IMR-90 (cell line): ENCODE measurements at regions of chr2 and their contacts with region 1.

Region 1: GRCh38 chr2:163735685-163736432 is at the start of gene FIGN:
- DNase-seq: peak; percentile 82
- ATAC-seq: peak; percentile 88
- H3K4me3 ChIP-seq: peak within 1 kb of the TSS; percentile 55
- H3K27ac ChIP-seq: peak within 1 kb of the TSS; percentile 81
- H3K4me1 ChIP-seq: peaks cover 2% of the 10 kb centered on the region
- H3K27me3 ChIP-seq: peaks cover 3% of the 10 kb centered on the region; the same call in 1 of the 2 replicates
- CTCF ChIP-seq: no peak
- POLR2A ChIP-seq: peak; percentile 70; the same call in 1 of the 2 replicates
- RAD21 ChIP-seq: no peak
- total RNA-seq, gene FIGN: 0.56 and 0.90 TPM in 2 replicates

Region 2: GRCh38 chr2:163155279-163155883 is 580.5 kb before region 1 on chr2:
- CTCF ChIA-PET with region 1: interaction called, 3 read pairs
- POLR2A ChIA-PET with region 1: no interaction called
- dilution Hi-C with region 1: no loop called
- in situ Hi-C with region 1: no loop called
- intact Hi-C with region 1: loop called (anchors 10 kb)
- DNase-seq: peak; percentile 35
- ATAC-seq: peak; percentile 52
- H3K4me3 ChIP-seq: no peak overlapping the region
- H3K27ac ChIP-seq: no peak overlapping the region
- H3K4me1 ChIP-seq: peaks cover 8% of the 10 kb centered on the region
- H3K27me3 ChIP-seq: no peaks in the 10 kb centered on the region
- CTCF ChIP-seq: peak; percentile 73
- POLR2A ChIP-seq: no peak
- RAD21 ChIP-seq: peak; percentile 80

Region 3: GRCh38 chr2:163351143-163351542 is 384.7 kb before region 1 on chr2:
- CTCF ChIA-PET with region 1: interaction called, 10 read pairs
- POLR2A ChIA-PET with region 1: interaction called, 4 read pairs
- dilution Hi-C with region 1: no loop called
- in situ Hi-C with region 1: no loop called
- intact Hi-C with region 1: loop called (anchors 1 kb)
- DNase-seq: no peak
- ATAC-seq: no peak
- H3K4me3 ChIP-seq: no peak overlapping the region
- H3K27ac ChIP-seq: no peak overlapping the region
- H3K4me1 ChIP-seq: peaks cover 9% of the 10 kb centered on the region
- H3K27me3 ChIP-seq: no peaks in the 10 kb centered on the region
- CTCF ChIP-seq: no peak
- POLR2A ChIP-seq: no peak
- RAD21 ChIP-seq: no peak

Region 4: DNA sequence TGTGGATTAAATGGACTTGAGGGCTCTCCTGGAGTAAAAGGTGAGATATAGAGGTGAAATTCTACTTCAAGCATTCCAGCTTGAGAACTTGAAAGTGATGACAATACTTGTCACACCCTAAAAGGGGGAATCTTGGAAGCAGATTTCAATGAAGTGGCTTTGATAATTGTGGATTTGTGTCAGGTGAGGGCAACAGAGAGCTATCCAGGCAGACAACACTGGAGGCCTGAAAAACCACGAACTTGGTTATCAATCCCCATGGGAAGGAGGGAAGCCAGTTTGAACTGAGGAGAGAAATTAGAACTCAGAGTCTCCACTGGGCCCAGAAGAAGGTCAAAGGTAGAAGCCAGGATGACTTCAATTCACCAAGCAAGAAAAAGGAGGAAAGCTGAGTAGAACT is 263.9 kb before region 1 on chr2:
- CTCF ChIA-PET with region 1: no interaction called
- POLR2A ChIA-PET with region 1: no interaction called
- dilution Hi-C with region 1: no loop called
- in situ Hi-C with region 1: no loop called
- intact Hi-C with region 1: loop called (anchors 10 kb)
- DNase-seq: peak; percentile 3
- ATAC-seq: no peak
- H3K4me3 ChIP-seq: no peak overlapping the region
- H3K27ac ChIP-seq: no peak overlapping the region
- H3K4me1 ChIP-seq: no peaks in the 10 kb centered on the region
- H3K27me3 ChIP-seq: no peaks in the 10 kb centered on the region
- CTCF ChIP-seq: peak; percentile 38
- POLR2A ChIP-seq: no peak
- RAD21 ChIP-seq: peak; percentile 51

Region 5: DNA sequence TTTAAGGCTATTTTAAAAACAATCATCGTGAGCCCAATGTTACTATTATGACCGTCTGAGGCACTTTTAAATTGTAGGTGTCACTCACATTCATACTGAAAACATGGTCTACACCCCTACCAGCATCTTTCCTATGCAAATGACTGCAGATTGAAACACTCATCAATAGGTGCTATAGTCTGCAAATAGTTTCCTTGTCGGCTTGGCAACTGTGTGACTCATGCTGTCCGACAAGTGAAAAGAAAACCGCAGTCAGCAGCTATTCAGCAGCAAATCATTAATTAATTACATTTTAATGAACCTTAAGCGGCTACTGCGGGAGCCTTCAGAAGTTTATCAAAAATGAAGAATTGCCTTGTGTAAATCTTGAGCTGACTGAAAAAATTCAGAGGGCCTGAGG is 134.5 kb before region 1 on chr2:
- CTCF ChIA-PET with region 1: no interaction called
- POLR2A ChIA-PET with region 1: no interaction called
- dilution Hi-C with region 1: no loop called
- in situ Hi-C with region 1: no loop called
- intact Hi-C with region 1: loop called (anchors 5 kb)
- DNase-seq: peak; percentile 24
- ATAC-seq: no peak
- H3K4me3 ChIP-seq: no peak overlapping the region
- H3K27ac ChIP-seq: no peak overlapping the region
- H3K4me1 ChIP-seq: peaks cover 3% of the 10 kb centered on the region
- H3K27me3 ChIP-seq: no peaks in the 10 kb centered on the region
- CTCF ChIP-seq: no peak
- POLR2A ChIP-seq: no peak
- RAD21 ChIP-seq: no peak

Region 6: DNA sequence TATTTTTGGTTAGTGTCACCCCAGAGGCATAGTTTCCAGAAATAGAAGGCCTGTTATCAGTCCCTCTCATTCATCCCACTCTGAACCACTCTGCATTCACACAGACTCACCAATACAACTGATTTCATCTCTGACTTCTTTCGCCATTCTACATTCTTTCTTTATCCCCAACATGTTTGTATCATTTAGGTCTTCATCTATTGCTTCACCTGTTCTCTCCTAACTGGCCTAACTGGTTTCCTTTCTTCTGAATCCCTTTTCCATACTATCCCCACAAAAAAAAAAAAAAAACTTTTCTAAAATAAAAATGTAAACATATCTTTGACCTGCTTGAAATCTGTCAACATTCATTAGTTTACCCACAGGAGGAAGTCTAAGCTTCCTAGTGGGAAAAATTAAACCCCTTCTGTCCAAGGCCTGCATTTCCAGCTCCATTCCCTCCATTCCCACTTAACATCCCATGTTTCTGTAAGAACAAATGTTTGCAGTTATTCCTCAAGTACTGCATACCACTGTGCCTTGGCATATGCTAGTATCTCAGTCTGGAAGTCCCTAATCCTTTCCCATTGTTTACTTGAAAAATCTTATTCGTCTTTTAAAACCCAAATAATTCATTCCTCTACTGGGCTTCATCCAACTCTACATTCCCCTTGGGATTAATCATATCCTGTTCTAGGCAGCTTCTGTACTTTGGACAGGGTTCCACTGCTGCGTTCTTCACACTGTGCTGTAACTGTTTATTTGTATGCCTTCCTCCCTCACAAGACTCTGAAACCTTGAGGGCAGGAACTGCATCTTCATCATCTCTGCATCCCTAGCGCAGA is 68.6 kb before region 1 on chr2:
- CTCF ChIA-PET with region 1: interaction called, 4 read pairs
- POLR2A ChIA-PET with region 1: no interaction called
- dilution Hi-C with region 1: no loop called
- in situ Hi-C with region 1: no loop called
- intact Hi-C with region 1: loop called (anchors 2 kb)
- DNase-seq: peak; percentile 94
- ATAC-seq: peak; percentile 92
- H3K4me3 ChIP-seq: no peak overlapping the region
- H3K27ac ChIP-seq: no peak overlapping the region
- H3K4me1 ChIP-seq: peaks cover 6% of the 10 kb centered on the region; the same call in 1 of the 2 replicates
- H3K27me3 ChIP-seq: no peaks in the 10 kb centered on the region
- CTCF ChIP-seq: no peak
- POLR2A ChIP-seq: no peak
- RAD21 ChIP-seq: no peak

Region 7: GRCh38 chr2:163715199-163715598 is 20.7 kb before region 1 on chr2:
- CTCF ChIA-PET with region 1: no interaction called
- POLR2A ChIA-PET with region 1: no interaction called
- dilution Hi-C with region 1: no loop called
- in situ Hi-C with region 1: no loop called
- intact Hi-C with region 1: no loop called
- DNase-seq: no peak
- ATAC-seq: no peak
- H3K4me3 ChIP-seq: no peak overlapping the region
- H3K27ac ChIP-seq: no peak overlapping the region
- H3K4me1 ChIP-seq: no peaks in the 10 kb centered on the region
- H3K27me3 ChIP-seq: no peaks in the 10 kb centered on the region
- CTCF ChIP-seq: no peak
- POLR2A ChIP-seq: no peak
- RAD21 ChIP-seq: no peak

Region 8: GRCh38 chr2:164464376-164464775 is 728.5 kb after region 1 on chr2:
- CTCF ChIA-PET with region 1: interaction called, 10 read pairs
- POLR2A ChIA-PET with region 1: no interaction called
- dilution Hi-C with region 1: no loop called
- in situ Hi-C with region 1: no loop called
- intact Hi-C with region 1: no loop called
- DNase-seq: no peak
- ATAC-seq: no peak
- H3K4me3 ChIP-seq: no peak overlapping the region
- H3K27ac ChIP-seq: no peak overlapping the region
- H3K4me1 ChIP-seq: no peaks in the 10 kb centered on the region
- H3K27me3 ChIP-seq: no peaks in the 10 kb centered on the region
- CTCF ChIP-seq: no peak
- POLR2A ChIP-seq: no peak
- RAD21 ChIP-seq: no peak